ENCODE measurements at regions of chr9 and their contacts with region 1.

Region 1: GRCh38 chr9:4315582-4316215 is 15.8 kb upstream of the GLIS3 start:
- DNase-seq: peak; percentile 41 to 42
- ATAC-seq: peak; percentile 74 to 81
- H3K4me3 ChIP-seq: no peak overlapping the region
- H3K27ac ChIP-seq: no peak overlapping the region
- H3K4me1 ChIP-seq: no peaks in the 10 kb centered on the region
- H3K27me3 ChIP-seq: no peaks in the 10 kb centered on the region
- CTCF ChIP-seq: peak in 4 of 5 experiments; percentile 57 to 84 (median 74)
- POLR2A ChIP-seq: no peak

Region 2: DNA sequence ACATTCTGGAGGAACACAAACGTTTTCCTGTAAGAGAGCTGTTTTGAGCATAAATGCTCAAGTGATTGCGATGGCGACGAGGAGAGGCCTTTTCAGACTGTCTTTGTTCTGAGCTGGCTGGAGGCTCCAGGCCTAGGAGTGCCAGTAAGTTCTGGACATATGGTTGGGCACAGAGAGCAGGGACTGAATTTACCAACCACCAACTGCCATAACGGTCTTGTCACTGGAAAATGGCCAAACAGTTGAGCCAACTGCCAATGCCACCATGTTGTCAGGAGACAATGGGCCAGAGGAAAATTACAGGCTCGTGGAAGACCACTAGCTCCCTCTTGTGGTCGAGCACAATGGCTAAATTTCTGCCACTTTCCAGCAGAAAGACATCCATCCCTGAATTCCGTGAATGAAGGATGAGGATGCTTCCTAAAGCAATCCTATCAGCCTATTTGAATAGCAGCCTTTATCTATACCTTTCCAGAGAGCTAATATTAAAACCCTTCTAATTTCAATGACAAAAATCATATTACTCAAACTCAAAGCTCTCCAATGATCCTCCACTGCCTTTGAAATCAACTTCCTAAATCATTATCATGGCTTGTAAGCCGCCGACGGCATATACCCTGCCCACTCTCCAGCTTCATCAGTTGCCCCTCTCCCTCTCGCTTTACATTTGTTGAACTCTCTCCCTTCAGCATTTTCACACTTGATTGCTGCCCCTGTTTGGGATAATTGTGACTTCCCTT is 51.1 kb after region 1 on chr9:
- in situ Hi-C with region 1: no loop called
- intact Hi-C with region 1: loop called (anchors 2 kb)
- DNase-seq: peak in 1 of 2 donors; percentile 14
- ATAC-seq: peak in 1 of 2 donors; percentile 41
- H3K4me3 ChIP-seq: no peak overlapping the region
- H3K27ac ChIP-seq: no peak overlapping the region
- H3K4me1 ChIP-seq: no peaks in the 10 kb centered on the region
- H3K27me3 ChIP-seq: no peaks in the 10 kb centered on the region
- CTCF ChIP-seq: peak; percentile 9 to 63 (median 56)
- POLR2A ChIP-seq: no peak

Region 3: GRCh38 chr9:4630836-4631235 is 315.1 kb after region 1 on chr9:
- in situ Hi-C with region 1: no loop called
- intact Hi-C with region 1: loop called (anchors 10 kb)
- DNase-seq: no peak
- ATAC-seq: no peak
- H3K4me3 ChIP-seq: no peak overlapping the region
- H3K27ac ChIP-seq: no peak overlapping the region
- H3K4me1 ChIP-seq: no peaks in the 10 kb centered on the region
- H3K27me3 ChIP-seq: no peaks in the 10 kb centered on the region
- CTCF ChIP-seq: no peak
- POLR2A ChIP-seq: no peak

Region 4: DNA sequence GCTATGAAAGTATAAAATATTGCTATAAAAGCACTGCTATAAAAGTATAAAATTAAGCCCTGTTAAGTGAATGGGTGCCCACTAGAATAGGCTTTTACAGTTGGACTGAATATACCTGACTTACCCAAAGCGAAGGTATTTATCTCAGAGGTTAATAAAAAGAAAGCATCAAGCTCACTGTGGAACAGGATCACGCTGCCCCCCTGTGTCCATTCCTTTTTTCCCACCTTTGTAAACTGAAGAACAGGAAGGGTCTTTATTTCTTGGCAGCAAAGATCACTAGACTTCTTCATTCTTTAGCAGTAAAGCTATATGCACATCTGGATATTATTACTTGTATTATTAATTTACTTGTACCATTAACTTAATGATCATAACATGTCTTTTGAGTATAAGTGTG is 324.3 kb after region 1 on chr9:
- in situ Hi-C with region 1: loop called in 1 of 4 experiments (anchors 10 kb)
- intact Hi-C with region 1: loop called (anchors 10 kb)
- DNase-seq: no peak
- ATAC-seq: no peak
- H3K4me3 ChIP-seq: no peak overlapping the region
- H3K27ac ChIP-seq: no peak overlapping the region
- H3K4me1 ChIP-seq: no peaks in the 10 kb centered on the region
- H3K27me3 ChIP-seq: no peaks in the 10 kb centered on the region
- CTCF ChIP-seq: peak; percentile 22 to 55 (median 46)
- POLR2A ChIP-seq: no peak

Measured in gastrocnemius medialis (tissue), 4 donors.